Lower leg skin (tissue), 4 donors: ENCODE measurements at regions of chr11 and their contacts with region 1.

Region 1: GRCh38 chr11:107898270-107898669 is 30.0 kb upstream of the RAB39A start:
- DNase-seq: no peak
- H3K4me3 ChIP-seq: no peak overlapping the region
- CTCF ChIP-seq: no peak
- POLR2A ChIP-seq: no peak

Region 2: DNA sequence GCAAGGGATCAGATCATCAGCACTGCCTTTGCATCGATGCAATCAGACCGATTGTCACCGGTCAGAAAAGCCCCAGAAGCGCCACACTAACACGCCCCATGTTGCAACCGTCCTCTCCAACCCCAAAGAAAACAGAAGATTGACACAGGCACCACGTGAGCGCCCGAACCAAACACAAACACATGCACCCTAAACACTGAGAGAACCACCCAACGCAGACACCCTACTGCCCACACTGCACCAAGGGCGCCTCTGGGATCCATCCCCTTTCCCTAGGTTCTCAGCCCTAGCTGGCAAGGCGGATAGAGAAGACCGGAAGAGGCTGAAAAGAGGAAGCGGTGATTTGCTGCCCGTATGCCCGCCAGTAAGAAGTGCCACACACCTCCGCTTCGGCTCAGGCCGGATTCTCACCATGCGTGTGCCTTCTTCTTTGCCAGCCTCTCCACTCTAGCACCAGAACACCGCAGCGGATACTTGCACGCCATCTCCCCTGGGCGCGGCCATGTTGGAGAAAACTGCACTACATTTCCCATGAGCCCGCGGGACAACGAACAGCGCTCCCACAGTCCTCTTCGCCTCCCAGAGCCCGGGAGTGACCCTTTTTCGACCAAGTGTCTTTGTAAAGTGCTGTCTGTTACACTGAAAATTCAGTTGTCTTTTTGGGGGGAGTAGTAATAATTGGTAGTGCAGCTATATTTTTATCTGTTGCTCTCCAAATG is 332.9 kb before region 1 on chr11 and contains the start of gene ALKBH8:
- intact Hi-C with region 1: loop called (anchors 10 kb)
- DNase-seq: peak; percentile 73 to 95
- H3K4me3 ChIP-seq: peak within 1 kb of the TSS; percentile 71
- CTCF ChIP-seq: no peak
- POLR2A ChIP-seq: no peak
- total RNA-seq, gene ALKBH8: 5.6 to 14.5 (median 9.2) TPM